ENCODE measurements at regions of chr19 and their contacts with region 1.

Region 1: GRCh38 chr19:17266975-17267788 is at the start of gene BABAM1:
- DNase-seq: peak; percentile 97
- H3K4me3 Mint-ChIP-seq: peak within 1 kb of the TSS; percentile 85
- H3K27ac Mint-ChIP-seq: peak within 1 kb of the TSS; percentile 47
- H3K4me1 Mint-ChIP-seq: peaks cover 31% of the 10 kb centered on the region
- H3K27me3 Mint-ChIP-seq: no peaks in the 10 kb centered on the region
- total RNA-seq, gene BABAM1: 98.5 to 100 TPM

Region 2: DNA sequence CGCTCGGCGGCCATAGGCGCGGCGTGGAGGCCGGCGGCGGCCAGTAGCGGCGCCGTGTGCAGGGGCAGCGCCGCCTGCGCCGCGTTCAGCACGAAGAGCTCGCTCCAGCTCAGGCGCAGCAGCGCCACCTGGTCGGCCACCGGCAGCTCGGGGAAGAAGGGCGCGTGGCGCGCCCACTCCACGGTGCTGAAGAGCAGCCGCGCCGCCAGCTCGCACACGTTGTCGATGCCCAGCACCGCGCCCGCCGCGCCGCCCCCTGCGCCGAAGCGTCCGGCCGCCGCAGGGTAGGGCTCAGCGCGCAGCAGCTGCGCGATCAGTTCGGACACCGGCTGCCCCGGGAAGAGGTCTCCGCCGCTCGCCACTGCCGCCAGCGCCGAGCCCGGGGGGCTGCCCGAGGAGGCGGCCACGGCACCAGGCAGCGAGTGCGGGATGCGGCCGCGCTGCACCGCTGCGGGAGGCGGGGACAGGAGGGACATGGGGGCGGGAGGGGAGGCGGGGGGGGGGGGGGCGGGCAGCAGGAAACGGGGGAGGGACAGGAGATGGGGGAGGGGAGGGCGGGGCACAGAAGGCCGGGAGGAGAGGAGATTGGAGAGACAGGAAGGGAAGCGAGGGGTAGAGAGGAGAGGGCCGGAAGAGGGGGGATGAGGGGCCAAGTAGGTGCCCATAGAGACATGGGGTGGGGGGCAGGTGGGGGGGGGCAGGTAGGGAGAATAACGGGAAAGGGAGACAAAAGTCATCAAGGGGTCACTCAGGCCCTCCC is 31.4 kb before region 1 on chr19:
- CTCF ChIA-PET with region 1: interaction called, 10 read pairs
- POLR2A ChIA-PET with region 1: interaction called, 4 read pairs
- DNase-seq: peak; percentile 79
- H3K4me3 Mint-ChIP-seq: peak overlapping the region; percentile 76
- H3K27ac Mint-ChIP-seq: peak overlapping the region; percentile 68
- H3K4me1 Mint-ChIP-seq: peaks cover 17% of the 10 kb centered on the region
- H3K27me3 Mint-ChIP-seq: no peaks in the 10 kb centered on the region

Region 3: GRCh38 chr19:17282488-17283255 is 15.5 kb after region 1 on chr19:
- CTCF ChIA-PET with region 1: interaction called, 64 read pairs
- POLR2A ChIA-PET with region 1: interaction called, 26 read pairs
- DNase-seq: peak; percentile 84
- H3K4me3 Mint-ChIP-seq: peak overlapping the region; percentile 85
- H3K27ac Mint-ChIP-seq: peak overlapping the region; percentile 75
- H3K4me1 Mint-ChIP-seq: peaks cover 14% of the 10 kb centered on the region
- H3K27me3 Mint-ChIP-seq: no peaks in the 10 kb centered on the region

Region 4: DNA sequence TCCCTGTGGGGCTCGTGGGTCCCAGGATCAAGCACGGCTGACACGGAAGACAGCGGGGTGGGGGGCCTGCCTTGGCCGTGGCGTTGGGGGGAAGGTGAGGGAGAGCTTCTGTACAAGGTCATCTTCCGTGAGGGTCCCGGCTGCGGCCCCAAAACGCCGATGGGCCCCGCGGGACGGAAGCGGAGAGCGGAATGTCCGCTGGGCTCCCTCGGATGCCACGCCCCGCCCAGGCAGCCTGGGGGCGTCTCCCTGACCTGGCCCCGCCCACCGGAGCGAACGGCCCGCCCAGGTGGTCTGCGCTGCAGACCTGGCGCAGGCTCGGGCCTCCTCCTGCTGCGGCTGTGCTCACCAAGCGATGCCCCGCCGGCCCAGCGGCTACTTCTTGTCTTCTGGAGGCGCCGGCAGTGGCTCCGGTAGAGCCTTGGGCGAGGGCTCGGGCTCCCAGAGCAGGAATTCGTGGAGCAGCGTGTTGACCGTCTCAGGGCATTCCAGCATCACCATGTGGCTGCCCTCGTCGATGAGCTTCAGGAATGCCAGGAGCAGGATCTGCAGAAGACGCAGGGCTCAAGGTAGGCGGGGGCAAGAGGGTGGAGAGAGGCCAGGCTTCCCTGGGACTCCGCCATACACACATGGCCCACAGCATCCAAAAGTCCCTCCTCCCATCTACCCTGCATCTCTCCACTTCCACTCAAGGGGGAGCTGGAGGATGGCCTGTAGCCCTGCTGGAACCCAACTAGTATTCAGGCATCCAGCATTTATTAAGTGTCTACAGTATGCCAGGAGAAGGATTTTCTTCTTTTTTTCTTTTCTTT is 25.3 kb after region 1 on chr19:
- CTCF ChIA-PET with region 1: interaction called, 11 read pairs
- POLR2A ChIA-PET with region 1: interaction called, 3 read pairs
- DNase-seq: peak; percentile 82
- H3K4me3 Mint-ChIP-seq: peak overlapping the region; percentile 83
- H3K27ac Mint-ChIP-seq: peak overlapping the region; percentile 40
- H3K4me1 Mint-ChIP-seq: peaks cover 15% of the 10 kb centered on the region
- H3K27me3 Mint-ChIP-seq: peaks cover 3% of the 10 kb centered on the region

Measured in activated CD4-positive, alpha-beta memory T cell treated with anti-CD3 and anti-CD28 coated beads, Interleukin-2, amount 10 ng/mL, durations not matched to agents 7 days and 5 days (primary cell).